Activated CD8-positive, alpha-beta T cell treated with anti-CD3 and anti-CD28 coated beads, Interleukin-2, amount 10 ng/mL, durations not matched to agents 7 days and 5 days (primary cell): ENCODE measurements at regions of chr12 and their contacts with region 1.

Region 1: GRCh38 chr12:107670999-107671643 is 14.5 kb upstream of the PWP1 start:
- DNase-seq: peak; percentile 61
- ATAC-seq: peak; percentile 80
- H3K4me3 Mint-ChIP-seq: no peak overlapping the region
- H3K27ac Mint-ChIP-seq: no peak overlapping the region
- H3K4me1 Mint-ChIP-seq: peaks cover 2% of the 10 kb centered on the region
- H3K27me3 Mint-ChIP-seq: peaks cover 19% of the 10 kb centered on the region

Region 2: DNA sequence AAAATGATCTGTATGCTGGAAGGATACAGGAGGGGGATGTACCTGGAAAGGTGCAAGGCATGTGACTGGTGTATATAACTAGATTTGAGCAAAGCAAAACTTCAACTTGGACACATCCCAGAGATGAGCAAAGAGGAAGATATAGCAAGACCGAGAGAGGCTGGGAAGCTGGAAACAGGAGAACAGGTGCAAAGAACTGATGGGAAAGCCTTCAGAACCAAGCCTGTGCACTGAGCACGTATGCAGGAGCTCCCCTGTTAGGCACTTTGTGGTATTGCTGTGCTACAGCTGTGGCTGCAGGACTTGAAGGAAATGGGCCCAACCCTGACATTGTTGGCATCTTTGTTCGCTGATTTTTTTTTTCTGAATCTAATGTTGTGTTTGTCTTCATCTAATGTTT is 106.2 kb before region 1 on chr12:
- CTCF ChIA-PET with region 1: no interaction called
- POLR2A ChIA-PET with region 1: no interaction called
- DNase-seq: peak; percentile 28
- ATAC-seq: peak; percentile 68
- H3K4me3 Mint-ChIP-seq: no peak overlapping the region
- H3K27ac Mint-ChIP-seq: no peak overlapping the region
- H3K4me1 Mint-ChIP-seq: peaks cover 20% of the 10 kb centered on the region
- H3K27me3 Mint-ChIP-seq: no peaks in the 10 kb centered on the region

Region 3: DNA sequence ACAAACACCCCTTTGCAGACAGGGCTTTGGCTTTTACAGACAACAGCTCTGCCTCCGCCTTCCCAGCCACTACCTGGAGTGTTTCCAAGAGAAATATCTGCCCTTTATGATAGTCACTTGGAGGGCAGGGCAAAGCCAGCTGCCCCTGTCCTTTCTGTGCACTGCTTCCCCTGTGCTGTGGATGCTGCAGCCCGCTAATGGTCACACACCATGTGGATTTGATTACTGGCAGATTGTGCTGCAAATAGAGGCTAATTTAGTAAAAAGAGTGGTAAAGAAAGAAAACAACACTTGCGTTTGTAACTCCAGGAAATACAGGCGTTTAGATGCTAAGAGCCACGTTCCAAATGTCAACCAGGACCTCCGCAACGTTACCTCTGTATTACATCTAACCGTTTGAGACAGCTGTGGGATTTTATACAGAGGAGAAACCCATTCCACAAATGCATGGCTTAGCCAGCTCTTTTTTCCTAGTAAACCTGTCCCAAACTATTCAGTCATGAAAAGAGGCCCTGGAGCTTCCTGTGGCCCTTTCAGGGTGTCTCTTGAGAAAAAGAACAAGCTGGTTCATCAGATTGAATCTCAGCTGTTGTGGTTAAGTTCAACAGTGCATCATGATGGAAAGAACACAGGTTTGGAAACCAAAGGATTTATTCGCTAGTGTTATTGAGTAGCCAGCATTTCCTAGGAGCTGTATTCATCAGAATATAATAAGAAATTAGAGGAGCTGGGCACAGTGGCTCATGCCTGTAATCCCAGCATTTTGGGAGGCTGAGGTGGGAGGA is 15.6 kb before region 1 on chr12:
- CTCF ChIA-PET with region 1: interaction called, 14 read pairs
- POLR2A ChIA-PET with region 1: no interaction called
- DNase-seq: no peak
- ATAC-seq: no peak
- H3K4me3 Mint-ChIP-seq: no peak overlapping the region
- H3K27ac Mint-ChIP-seq: no peak overlapping the region
- H3K4me1 Mint-ChIP-seq: peaks cover 3% of the 10 kb centered on the region
- H3K27me3 Mint-ChIP-seq: no peaks in the 10 kb centered on the region

Region 4: GRCh38 chr12:107685360-107686248 is 14.5 kb after region 1 on chr12 and contains the start of gene PWP1:
- CTCF ChIA-PET with region 1: interaction called, 28 read pairs
- POLR2A ChIA-PET with region 1: interaction called, 3 read pairs
- DNase-seq: peak; percentile 96
- ATAC-seq: peak; percentile 95
- H3K4me3 Mint-ChIP-seq: peak within 1 kb of the TSS; percentile 83
- H3K27ac Mint-ChIP-seq: peak within 1 kb of the TSS; percentile 98
- H3K4me1 Mint-ChIP-seq: peaks cover 27% of the 10 kb centered on the region
- H3K27me3 Mint-ChIP-seq: no peaks in the 10 kb centered on the region
- total RNA-seq, gene PWP1: 40.9 to 44.6 TPM

Region 5: DNA sequence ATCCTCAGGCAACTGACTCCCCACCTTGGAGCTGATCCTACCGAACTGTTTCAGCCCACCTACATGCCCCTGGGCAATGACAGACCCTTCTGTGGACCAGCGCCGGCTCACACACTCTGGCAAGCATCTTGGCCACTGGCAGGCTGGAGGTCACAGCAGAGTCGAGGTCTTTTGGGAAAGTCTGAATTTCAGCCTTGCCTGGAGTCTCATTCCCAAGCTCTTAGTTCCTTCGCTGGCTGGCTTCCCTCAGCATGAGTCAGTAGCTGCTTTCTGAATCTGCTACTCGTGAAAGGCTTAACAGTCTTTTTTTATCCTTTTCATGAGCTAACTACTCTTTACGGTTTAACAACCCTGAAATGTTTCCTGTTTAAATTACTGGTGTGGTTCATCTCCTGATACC is 147.9 kb after region 1 on chr12:
- CTCF ChIA-PET with region 1: no interaction called
- POLR2A ChIA-PET with region 1: no interaction called
- DNase-seq: no peak
- ATAC-seq: no peak
- H3K4me3 Mint-ChIP-seq: no peak overlapping the region
- H3K27ac Mint-ChIP-seq: no peak overlapping the region
- H3K4me1 Mint-ChIP-seq: no peaks in the 10 kb centered on the region
- H3K27me3 Mint-ChIP-seq: peaks cover 5% of the 10 kb centered on the region

Region 6: DNA sequence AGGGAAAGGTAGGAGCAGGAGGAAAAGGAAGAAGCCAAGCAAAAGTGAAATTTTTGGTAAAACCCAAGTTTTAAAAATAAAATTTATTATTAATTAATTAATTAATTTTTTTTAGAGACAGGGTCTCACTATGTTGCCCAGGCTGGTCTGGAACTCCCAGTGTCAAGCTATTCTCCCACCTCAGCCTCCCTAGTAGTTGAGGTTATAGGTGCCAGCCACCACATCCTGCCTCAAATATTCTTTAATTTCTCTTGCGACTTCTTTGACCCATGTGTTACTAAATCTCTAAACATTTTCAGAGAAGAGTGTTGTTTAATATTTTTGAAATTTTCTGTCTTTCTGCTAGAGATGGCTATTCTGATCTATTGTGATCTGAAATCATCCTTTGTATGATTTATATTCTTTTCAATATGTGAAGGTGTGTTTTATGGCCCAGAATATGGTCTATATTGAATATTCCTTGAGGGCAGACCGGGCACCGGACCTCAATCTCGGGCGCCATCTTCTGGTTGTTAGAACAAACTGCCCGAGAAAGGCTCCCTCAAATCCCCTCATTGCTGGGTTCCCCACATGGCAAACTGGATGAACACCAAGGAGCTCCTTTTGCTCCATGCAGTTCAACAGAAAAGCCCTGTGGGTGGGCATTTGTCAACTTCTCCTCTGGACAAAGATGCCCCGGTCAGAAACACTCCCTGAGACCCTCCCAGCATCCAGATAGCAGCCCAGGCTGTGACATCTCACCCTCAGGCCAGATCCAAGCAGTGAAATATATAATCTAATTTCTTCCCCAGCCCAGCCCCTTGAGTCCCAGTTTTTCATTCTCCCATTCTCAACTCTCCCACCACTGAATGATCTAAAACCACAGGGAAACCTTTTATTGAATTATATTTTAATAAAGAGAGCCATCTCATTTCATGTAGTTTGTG is 213.9 kb after region 1 on chr12:
- CTCF ChIA-PET with region 1: interaction called, 12 read pairs
- POLR2A ChIA-PET with region 1: no interaction called
- DNase-seq: peak; percentile 71
- ATAC-seq: peak; percentile 71
- H3K4me3 Mint-ChIP-seq: no peak overlapping the region
- H3K27ac Mint-ChIP-seq: no peak overlapping the region
- H3K4me1 Mint-ChIP-seq: peaks cover 2% of the 10 kb centered on the region
- H3K27me3 Mint-ChIP-seq: peaks cover 21% of the 10 kb centered on the region